ENCODE measurements at regions of chr6 and their contacts with region 1.

Region 1: GRCh38 chr6:21593412-21593926 is at the start of gene SOX4:
- DNase-seq: peak; percentile 95
- ATAC-seq: peak; percentile 84
- H3K4me3 ChIP-seq: peak within 1 kb of the TSS; percentile 15 to 77
- H3K27ac ChIP-seq: peak within 1 kb of the TSS; percentile 78 to 91
- H3K4me1 ChIP-seq: no peaks in the 10 kb centered on the region
- H3K27me3 ChIP-seq: no peaks in the 10 kb centered on the region
- total RNA-seq, gene SOX4: 16.0 to 25.2 TPM

Region 2: DNA sequence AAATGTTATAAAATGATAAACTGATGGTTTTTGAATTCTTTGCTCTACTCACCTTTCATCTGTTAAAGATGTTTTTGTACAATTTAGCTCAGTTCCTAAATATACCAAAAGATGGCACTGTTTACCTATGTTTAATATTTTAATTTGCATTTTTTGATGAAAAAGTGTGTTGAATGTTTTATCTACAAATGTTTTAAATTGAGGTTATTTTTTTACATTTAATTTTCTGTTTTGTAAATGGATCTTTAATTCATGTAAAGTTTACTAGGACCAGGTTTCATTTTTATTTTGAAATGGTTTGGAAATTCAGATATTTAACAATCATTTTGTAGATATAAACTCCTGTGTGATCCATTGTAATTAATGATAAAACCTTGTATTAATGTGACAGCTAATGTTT is 1029.2 kb before region 1 on chr6:
- intact Hi-C with region 1: loop called (anchors 5 kb)
- DNase-seq: no peak
- ATAC-seq: no peak
- H3K4me3 ChIP-seq: no peak overlapping the region
- H3K27ac ChIP-seq: no peak overlapping the region
- H3K4me1 ChIP-seq: no peaks in the 10 kb centered on the region
- H3K27me3 ChIP-seq: no peaks in the 10 kb centered on the region

Region 3: DNA sequence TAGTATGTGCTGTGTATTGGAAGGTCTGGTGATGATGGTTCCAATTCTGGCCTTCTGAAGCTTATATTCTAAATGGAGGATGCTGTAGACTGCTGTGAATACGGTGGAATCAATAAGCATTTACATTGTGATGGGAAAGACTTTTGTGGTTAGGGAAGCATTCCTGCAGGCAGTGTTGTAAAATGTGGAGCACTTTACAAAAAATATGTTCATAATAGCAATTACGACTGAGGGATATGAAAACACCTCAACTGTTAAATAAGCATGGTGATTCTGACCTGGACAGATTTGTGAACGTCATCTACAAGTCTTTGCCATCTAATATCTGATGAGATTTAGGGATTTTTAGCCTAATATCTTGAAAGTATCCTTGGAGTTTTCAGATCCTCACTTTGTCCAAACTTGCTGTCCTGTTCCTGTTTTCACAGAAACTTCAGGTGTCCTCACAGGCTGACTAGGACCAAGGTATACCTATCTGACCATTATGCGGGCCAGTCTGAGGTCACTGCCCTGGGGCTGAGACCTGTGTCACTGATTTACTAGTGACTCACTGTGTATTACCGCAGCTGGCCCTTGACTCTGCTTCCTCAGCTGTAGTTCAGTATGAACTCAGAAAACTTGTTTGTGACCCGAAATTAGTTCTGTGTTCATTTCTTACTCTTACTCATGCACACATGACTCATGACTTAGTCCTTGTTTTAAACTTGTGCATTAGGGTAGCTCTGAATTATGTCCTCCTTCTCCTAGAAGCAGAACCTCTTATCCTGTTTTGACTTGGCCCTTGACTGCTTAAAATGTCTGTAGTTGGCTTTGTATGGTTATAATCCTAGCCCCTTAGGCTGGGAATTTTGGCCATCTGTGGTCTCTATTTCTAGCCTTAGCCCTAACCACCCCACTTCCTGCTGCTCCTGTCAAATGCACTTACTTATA is 716.2 kb before region 1 on chr6:
- intact Hi-C with region 1: loop called (anchors 5 to 10 kb)
- DNase-seq: peak in 1 of 2 donors; percentile 79
- ATAC-seq: peak; percentile 87
- H3K4me3 ChIP-seq: no peak overlapping the region
- H3K27ac ChIP-seq: peak overlapping the region in 1 of 2 donors; percentile 80
- H3K4me1 ChIP-seq: no peaks in the 10 kb centered on the region
- H3K27me3 ChIP-seq: no peaks in the 10 kb centered on the region

Region 4: DNA sequence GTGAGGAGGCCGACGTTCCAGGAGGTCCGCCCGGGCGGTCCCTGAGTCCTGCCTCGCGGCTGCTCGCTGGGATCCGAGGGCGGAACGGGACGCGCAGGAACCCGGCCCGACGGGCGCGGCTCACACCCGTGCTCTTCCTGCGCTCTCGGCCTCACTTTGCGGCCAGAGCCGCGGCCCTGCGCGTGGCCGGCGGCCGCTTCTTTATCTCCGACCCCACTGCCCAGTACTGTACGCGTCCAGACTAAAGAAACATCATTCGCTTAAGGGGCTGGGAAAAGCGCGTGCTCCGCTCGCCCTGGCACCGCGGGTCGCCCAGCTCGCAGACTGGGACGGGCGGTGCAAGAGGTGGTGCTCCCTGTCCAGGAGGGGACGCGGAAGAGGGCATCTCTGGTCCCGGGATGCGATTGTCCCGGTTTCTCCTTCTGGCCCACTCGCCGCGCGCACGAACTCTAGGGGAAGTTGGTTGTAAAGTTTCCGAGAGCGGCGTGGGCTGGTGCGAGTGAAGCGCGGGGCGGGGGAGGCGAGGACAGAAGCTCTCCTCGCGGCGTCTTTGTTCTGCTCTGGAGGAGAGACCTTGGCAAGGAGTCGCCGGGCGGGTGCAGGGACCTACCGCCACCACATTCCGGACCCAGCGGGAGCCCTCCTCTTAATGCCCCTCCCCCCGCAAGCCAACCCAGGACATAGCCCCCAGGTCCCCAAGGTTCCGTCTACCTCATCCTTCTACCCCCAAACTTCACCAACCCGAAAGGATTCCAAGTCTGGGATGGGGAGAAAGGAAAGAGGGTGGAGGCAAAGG is 71.0 kb after region 1 on chr6:
- intact Hi-C with region 1: loop called in 1 of 2 experiments (anchors 2 kb)
- DNase-seq: peak; percentile 56 to 80
- ATAC-seq: peak; percentile 55
- H3K4me3 ChIP-seq: peak overlapping the region; percentile 4 to 73
- H3K27ac ChIP-seq: no peak overlapping the region
- H3K4me1 ChIP-seq: no peaks in the 10 kb centered on the region
- H3K27me3 ChIP-seq: no peaks in the 10 kb centered on the region

Region 5: DNA sequence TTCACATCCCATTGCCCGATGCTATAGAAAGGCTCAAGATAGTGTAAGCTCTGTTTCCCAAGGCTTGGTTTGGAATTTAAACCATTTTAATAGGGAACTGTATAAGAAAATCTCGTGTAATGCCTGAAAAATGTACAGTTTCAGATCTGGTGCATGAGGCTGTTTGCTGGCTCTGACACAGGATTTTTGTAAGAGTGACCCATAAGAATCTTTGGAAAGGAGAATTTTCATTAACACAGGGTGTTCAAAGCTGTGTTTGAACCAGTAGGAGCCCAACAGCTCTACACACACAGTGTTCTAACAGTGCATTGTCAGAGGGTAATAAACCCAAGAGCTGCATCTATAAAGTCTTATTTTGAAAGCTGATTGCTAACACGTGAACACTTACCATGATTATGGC is 409.8 kb after region 1 on chr6:
- intact Hi-C with region 1: loop called in 1 of 2 experiments (anchors 5 kb)
- DNase-seq: no peak
- ATAC-seq: no peak
- H3K4me3 ChIP-seq: no peak overlapping the region
- H3K27ac ChIP-seq: no peak overlapping the region
- H3K4me1 ChIP-seq: peaks cover 1 to 9% of the 10 kb centered on the region in 2 donors
- H3K27me3 ChIP-seq: no peaks in the 10 kb centered on the region

Region 6: GRCh38 chr6:22737331-22737730 is 1143.9 kb after region 1 on chr6:
- intact Hi-C with region 1: loop called in 1 of 2 experiments (anchors 10 kb)
- DNase-seq: peak; percentile 50 to 63
- ATAC-seq: no peak
- H3K4me3 ChIP-seq: no peak overlapping the region
- H3K27ac ChIP-seq: no peak overlapping the region
- H3K4me1 ChIP-seq: peaks cover 0 to 2% of the 10 kb centered on the region in 2 donors
- H3K27me3 ChIP-seq: no peaks in the 10 kb centered on the region

Measured in aorta (tissue), 5 donors.